Mammary epithelial cell (primary cell): ENCODE measurements at regions of chr1 and their contacts with region 1.

Region 1: DNA sequence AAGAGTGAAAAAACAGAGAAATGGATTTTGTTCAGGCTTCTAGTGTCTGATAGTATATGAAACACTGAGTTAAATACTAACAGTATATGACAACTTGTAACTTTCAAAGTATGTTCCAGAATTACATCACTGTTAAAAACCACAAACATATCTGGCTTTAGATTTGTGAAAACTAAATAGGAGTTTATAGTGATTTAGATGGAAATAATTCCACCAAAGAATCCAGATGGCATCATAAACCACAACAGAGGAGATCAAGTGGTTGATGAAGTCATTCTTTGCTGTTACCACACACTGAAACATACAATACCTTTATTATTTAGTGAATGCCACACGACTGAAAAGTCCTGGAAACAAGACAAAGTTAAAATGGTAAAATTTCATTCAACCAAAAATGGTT is 37.2 kb downstream of the ALG14 start:
- DNase-seq: peak; percentile 93
- H3K4me3 ChIP-seq: no peak overlapping the region
- H3K27ac ChIP-seq: peak overlapping the region; percentile 54
- H3K4me1 ChIP-seq: peaks cover 37% of the 10 kb centered on the region
- H3K27me3 ChIP-seq: no peaks in the 10 kb centered on the region
- CTCF ChIP-seq: no peak

Region 2: DNA sequence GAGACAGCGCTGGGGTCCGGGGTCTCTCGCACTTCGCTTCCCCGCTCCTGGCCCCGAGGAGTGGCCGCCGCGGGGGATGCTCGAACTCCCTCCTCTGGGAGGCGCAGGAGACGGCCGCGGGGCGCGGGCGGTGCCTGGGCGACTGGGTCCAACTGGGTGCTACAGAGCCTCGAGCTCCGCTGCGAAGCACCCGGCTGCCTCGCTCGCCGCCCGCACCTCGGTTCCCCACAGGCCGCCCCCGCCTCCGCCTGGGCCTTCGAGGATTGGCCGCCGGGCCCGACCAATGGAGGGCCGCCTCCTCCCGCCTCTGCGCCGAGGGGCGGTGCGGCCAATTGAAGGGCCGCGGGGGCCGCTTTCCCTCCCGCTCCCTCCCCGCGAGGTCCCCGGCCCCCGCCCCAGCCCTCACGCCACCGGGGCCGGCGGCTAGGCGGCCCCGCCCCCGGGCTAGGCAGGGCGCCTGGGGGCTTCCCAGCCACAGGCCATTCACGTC is 108.6 kb before region 1 on chr1 and contains the start of gene CNN3:
- CTCF ChIA-PET with region 1: interaction called, 3 read pairs
- dilution Hi-C with region 1: no loop called
- in situ Hi-C with region 1: loop called in 1 of 2 experiments (anchors 10 kb)
- intact Hi-C with region 1: loop called (anchors 1 kb)
- DNase-seq: peak; percentile 92
- H3K4me3 ChIP-seq: peak within 1 kb of the TSS; percentile 75 to 83 (median 79)
- H3K27ac ChIP-seq: peak within 1 kb of the TSS; percentile 79
- H3K4me1 ChIP-seq: peaks cover 24% of the 10 kb centered on the region
- H3K27me3 ChIP-seq: no peaks in the 10 kb centered on the region
- CTCF ChIP-seq: no peak
- total RNA-seq, gene CNN3: 136 to 244 TPM

Region 3: DNA sequence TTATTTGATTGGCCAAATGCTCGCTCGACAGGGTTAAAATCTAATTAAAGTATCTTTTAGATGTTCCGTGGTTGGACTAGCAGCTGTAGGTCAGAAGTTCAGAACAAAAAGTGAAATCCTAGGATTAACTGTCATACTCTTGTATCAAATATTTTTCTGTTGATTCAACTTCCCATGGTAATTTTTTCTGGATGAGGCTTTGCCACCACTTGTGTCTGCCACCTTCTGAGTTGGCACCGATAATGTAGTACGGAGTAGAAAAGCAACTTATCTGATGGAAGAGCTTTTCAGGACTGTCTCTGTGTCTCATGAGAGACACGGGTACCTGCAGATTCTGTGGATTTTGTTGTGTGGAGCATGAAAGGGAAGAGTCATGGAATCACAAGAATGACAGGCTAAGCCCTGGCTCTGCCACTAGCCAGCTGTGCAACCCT is 64.0 kb before region 1 on chr1:
- CTCF ChIA-PET with region 1: no interaction called
- dilution Hi-C with region 1: no loop called
- in situ Hi-C with region 1: no loop called
- intact Hi-C with region 1: loop called (anchors 5 kb)
- DNase-seq: peak; percentile 74
- H3K4me3 ChIP-seq: peak overlapping the region in 1 of 3 experiments; percentile 25
- H3K27ac ChIP-seq: peak overlapping the region; percentile 40
- H3K4me1 ChIP-seq: peaks cover 30% of the 10 kb centered on the region
- H3K27me3 ChIP-seq: no peaks in the 10 kb centered on the region
- CTCF ChIP-seq: no peak

Region 4: GRCh38 chr1:95084317-95085176 is 49.0 kb after region 1 on chr1:
- CTCF ChIA-PET with region 1: no interaction called
- dilution Hi-C with region 1: loop called (anchors 5 kb)
- in situ Hi-C with region 1: no loop called
- intact Hi-C with region 1: no loop called
- DNase-seq: no peak
- H3K4me3 ChIP-seq: no peak overlapping the region
- H3K27ac ChIP-seq: no peak overlapping the region
- H3K4me1 ChIP-seq: peaks cover 7% of the 10 kb centered on the region
- H3K27me3 ChIP-seq: no peaks in the 10 kb centered on the region
- CTCF ChIP-seq: peak; percentile 67 to 80